Activated CD8-positive, alpha-beta T cell treated with anti-CD3 and anti-CD28 coated beads for 36 hours (primary cell): ENCODE measurements at regions of chrX and their contacts with region 1.

Region 1: DNA sequence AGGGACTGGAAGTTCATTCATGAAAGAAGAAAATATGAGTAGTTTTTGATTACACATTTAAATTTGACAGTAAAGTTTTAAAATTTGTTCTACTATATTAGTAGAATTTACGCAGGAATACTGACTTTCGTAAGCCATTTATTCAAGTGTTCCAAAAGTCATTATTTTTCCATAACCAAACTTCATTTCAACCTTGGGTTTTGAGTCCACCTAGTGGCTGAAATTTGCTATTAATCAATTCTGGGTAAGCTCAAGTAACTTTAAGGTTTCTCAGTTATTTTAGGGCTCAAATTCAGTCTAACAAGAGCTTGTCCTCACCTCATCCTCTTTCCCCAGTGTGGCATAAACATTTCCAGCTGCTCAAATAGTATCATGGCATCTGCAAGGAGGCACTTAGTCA is 175.4 kb downstream of the SH3BGRL start:
- DNase-seq: no peak
- ATAC-seq: no peak
- H3K4me3 Mint-ChIP-seq: no peak overlapping the region
- H3K27ac Mint-ChIP-seq: no peak overlapping the region
- H3K4me1 Mint-ChIP-seq: no peaks in the 10 kb centered on the region
- H3K27me3 Mint-ChIP-seq: peaks cover 8% of the 10 kb centered on the region
- CTCF ChIP-seq: peak; percentile 42

Region 2: GRCh38 chrX:81174286-81174685 is 203.0 kb before region 1 on chrX:
- CTCF ChIA-PET with region 1: interaction called, 9 read pairs
- POLR2A ChIA-PET with region 1: no interaction called
- intact Hi-C with region 1: loop called (anchors 10 kb)
- DNase-seq: no peak
- ATAC-seq: no peak
- H3K4me3 Mint-ChIP-seq: no peak overlapping the region
- H3K27ac Mint-ChIP-seq: no peak overlapping the region
- H3K4me1 Mint-ChIP-seq: no peaks in the 10 kb centered on the region
- H3K27me3 Mint-ChIP-seq: no peaks in the 10 kb centered on the region
- CTCF ChIP-seq: peak; percentile 39